Adrenal gland (tissue), 19 donors: ENCODE measurements at regions of chr19 and their contacts with region 1.

Region 1: GRCh38 chr19:48102870-48103751 is 7.5 kb downstream of the PLA2G4C start:
- DNase-seq: peak in 3 of 7 donors; percentile 29 to 38 (median 36)
- H3K4me3 ChIP-seq: no peak overlapping the region
- H3K27ac ChIP-seq: no peak overlapping the region
- H3K4me1 ChIP-seq: peaks cover 0 to 7% of the 10 kb centered on the region in 2 donors
- H3K27me3 ChIP-seq: no peaks in the 10 kb centered on the region
- CTCF ChIP-seq: peak; percentile 40 to 60 (median 50)
- POLR2A ChIP-seq: no peak

Region 2: GRCh38 chr19:48255376-48256303 is 152.5 kb after region 1 on chr19 and contains the start of gene CARD8:
- intact Hi-C with region 1: loop called in 1 of 2 experiments (anchors 10 kb)
- DNase-seq: peak; percentile 77 to 89 (median 86)
- H3K4me3 ChIP-seq: peak within 1 kb of the TSS; percentile 59 to 99 (median 80)
- H3K27ac ChIP-seq: peak within 1 kb of the TSS; percentile 90 to 99 (median 91)
- H3K4me1 ChIP-seq: peaks cover 13 to 30% of the 10 kb centered on the region in 2 donors
- H3K27me3 ChIP-seq: no peaks in the 10 kb centered on the region
- CTCF ChIP-seq: peak in 3 of 6 experiments; percentile 30 to 42 (median 39)
- POLR2A ChIP-seq: peak; percentile 60 to 70
- total RNA-seq, gene CARD8: 14.1 to 45.3 (median 32.3) TPM